PC-3 (cell line): ENCODE measurements at regions of chr9 and their contacts with region 1.

Region 1: DNA sequence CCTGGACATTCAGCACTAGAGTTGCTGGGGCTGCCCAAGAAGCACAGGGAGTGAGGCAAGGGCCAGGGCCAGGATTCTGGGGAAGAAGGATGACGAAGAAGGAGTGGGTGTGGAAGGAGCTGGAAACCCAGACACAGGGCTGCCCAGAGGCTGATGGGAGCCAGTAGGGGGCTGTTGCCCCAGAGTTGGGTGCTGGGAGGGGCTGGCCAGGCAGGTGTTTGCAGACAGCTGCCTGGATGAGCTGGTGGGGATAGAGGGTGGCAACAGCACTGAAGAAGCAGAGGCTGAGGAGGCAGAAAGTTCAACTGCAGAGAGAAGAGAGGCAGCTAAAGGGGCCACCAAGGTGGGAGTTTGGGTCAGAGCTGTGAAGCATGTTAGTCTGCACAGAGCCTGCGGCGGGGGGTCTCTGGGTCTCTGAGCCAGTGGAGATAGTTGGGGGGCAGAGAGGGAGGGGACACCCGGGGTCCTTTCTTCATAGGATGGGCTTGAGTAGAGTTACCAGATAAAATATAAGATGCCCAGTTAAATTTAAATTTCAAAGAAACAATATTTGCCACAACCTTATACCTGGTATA is 2.5 kb upstream of the AQP7 start:
- DNase-seq: no peak
- ATAC-seq: no peak; the same call in 1 of the 2 replicates
- H3K4me3 ChIP-seq: no peak overlapping the region
- H3K27ac ChIP-seq: no peak overlapping the region
- H3K4me1 ChIP-seq: peaks cover 4% of the 10 kb centered on the region; the same call in 1 of the 2 replicates
- H3K27me3 ChIP-seq: no peaks in the 10 kb centered on the region
- CTCF ChIP-seq: no peak

Region 2: GRCh38 chr9:33393581-33393980 is 11.3 kb before region 1 on chr9:
- CTCF ChIA-PET with region 1: no interaction called
- POLR2A ChIA-PET with region 1: interaction called, 13 read pairs
- intact Hi-C with region 1: no loop called
- DNase-seq: no peak
- ATAC-seq: no peak
- H3K4me3 ChIP-seq: no peak overlapping the region
- H3K27ac ChIP-seq: no peak overlapping the region
- H3K4me1 ChIP-seq: peaks cover 6% of the 10 kb centered on the region; the same call in 1 of the 2 replicates
- H3K27me3 ChIP-seq: no peaks in the 10 kb centered on the region
- CTCF ChIP-seq: no peak

Region 3: GRCh38 chr9:33446946-33447798 is 42.3 kb after region 1 on chr9 and contains the start of gene AQP3:
- CTCF ChIA-PET with region 1: interaction called, 4 read pairs
- POLR2A ChIA-PET with region 1: no interaction called
- intact Hi-C with region 1: loop called (anchors 5 kb)
- DNase-seq: peak; percentile 68
- ATAC-seq: peak; percentile 77
- H3K4me3 ChIP-seq: peak within 1 kb of the TSS; percentile 72
- H3K27ac ChIP-seq: peak within 1 kb of the TSS; percentile 75
- H3K4me1 ChIP-seq: peaks cover 38% of the 10 kb centered on the region
- H3K27me3 ChIP-seq: no peaks in the 10 kb centered on the region
- CTCF ChIP-seq: peak; percentile 44
- total RNA-seq, gene AQP3: 5.1 and 9.6 TPM in 2 replicates

Region 4: DNA sequence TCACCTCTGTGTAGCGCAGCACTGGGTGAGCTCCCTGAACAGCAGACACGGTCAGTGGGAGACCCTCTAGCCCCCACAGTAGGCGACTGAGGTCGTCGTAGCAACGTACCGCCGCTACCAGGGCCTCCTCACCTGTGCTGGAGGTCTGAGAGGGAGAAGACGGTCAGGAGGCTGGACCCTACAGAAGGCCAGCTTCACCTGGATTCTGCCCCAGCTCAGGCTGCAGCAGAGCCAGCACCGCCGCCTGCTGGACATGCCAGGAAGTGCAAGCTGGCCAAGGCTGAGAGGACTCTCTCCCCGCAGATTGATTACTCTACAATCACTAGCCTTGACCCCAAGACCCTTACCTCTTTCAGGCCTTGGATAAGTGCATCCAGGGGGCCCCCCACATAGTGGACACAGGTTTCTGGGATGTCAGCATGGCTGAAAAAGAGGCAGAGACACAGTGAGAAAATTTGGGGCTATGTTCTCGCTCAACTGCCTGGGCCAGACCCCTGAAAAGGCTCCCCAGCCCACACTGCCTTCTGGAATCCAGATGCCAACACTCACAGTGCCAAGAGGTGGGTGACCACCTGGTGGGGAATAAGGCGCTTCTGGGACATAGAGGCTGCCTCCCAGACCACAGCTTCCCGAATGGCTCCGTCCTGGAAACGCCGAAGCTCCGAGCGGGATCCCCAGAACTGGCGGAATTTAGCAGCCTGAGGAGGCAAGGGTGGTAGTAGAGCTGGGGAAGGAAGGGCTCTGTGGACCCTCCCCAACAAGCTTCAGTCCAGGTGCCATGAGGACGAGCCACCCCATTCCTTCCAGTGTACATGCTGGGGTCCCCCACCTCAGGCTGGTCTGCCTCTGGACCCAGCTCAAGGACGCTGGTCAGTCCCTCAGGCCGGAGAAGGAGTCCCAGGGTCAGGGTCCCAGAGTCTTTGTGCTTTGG is 62.0 kb after region 1 on chr9:
- CTCF ChIA-PET with region 1: interaction called, 5 read pairs
- POLR2A ChIA-PET with region 1: no interaction called
- intact Hi-C with region 1: loop called (anchors 5 kb)
- DNase-seq: peak; percentile 59
- ATAC-seq: peak; percentile 66
- H3K4me3 ChIP-seq: no peak overlapping the region
- H3K27ac ChIP-seq: no peak overlapping the region
- H3K4me1 ChIP-seq: peaks cover 5% of the 10 kb centered on the region
- H3K27me3 ChIP-seq: no peaks in the 10 kb centered on the region
- CTCF ChIP-seq: peak; percentile 80